Activated CD4-positive, alpha-beta T cell treated with anti-CD3 and anti-CD28 coated beads, Interleukin-2, amount 10 ng/mL, durations not matched to agents 24 days and 14 days (primary cell): ENCODE measurements at regions of chr10 and their contacts with region 1.

Region 1: GRCh38 chr10:110547139-110547761 is 20.2 kb upstream of the SMC3 start:
- DNase-seq: peak; percentile 77
- H3K4me3 Mint-ChIP-seq: peak overlapping the region; percentile 47
- H3K27ac Mint-ChIP-seq: peak overlapping the region; percentile 10
- H3K4me1 Mint-ChIP-seq: peaks cover 19% of the 10 kb centered on the region
- H3K27me3 Mint-ChIP-seq: peaks cover 28% of the 10 kb centered on the region

Region 2: GRCh38 chr10:110502851-110503301 is 44.4 kb before region 1 on chr10:
- intact Hi-C with region 1: loop called (anchors 1 kb)
- DNase-seq: peak; percentile 84
- H3K4me3 Mint-ChIP-seq: peak overlapping the region; percentile 99
- H3K27ac Mint-ChIP-seq: peak overlapping the region; percentile 92
- H3K4me1 Mint-ChIP-seq: peaks cover 78% of the 10 kb centered on the region
- H3K27me3 Mint-ChIP-seq: no peaks in the 10 kb centered on the region

Region 3: GRCh38 chr10:110528224-110528997 is 18.8 kb before region 1 on chr10:
- intact Hi-C with region 1: no loop called
- DNase-seq: no peak
- H3K4me3 Mint-ChIP-seq: peak overlapping the region; percentile 57
- H3K27ac Mint-ChIP-seq: peak overlapping the region; percentile 84
- H3K4me1 Mint-ChIP-seq: peaks cover 69% of the 10 kb centered on the region
- H3K27me3 Mint-ChIP-seq: no peaks in the 10 kb centered on the region

Region 4: DNA sequence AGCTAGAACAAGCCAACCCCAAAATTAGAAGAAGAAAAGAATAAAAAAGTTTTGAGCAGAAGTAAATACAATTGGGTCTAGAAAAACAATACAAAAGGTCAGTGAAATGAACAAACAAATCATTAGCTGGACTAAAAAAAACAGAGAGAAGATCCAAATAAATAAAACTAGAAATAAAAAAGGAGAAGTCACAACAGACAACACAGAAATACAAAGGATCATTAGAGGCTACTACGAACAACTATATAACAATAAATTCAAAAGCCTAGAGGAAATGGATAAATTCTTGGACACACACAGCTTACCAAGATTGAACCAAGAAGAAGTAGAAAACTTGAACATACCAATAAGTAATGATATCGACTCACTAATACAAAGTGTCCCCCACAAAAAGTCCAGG is 516.2 kb after region 1 on chr10:
- intact Hi-C with region 1: no loop called
- DNase-seq: no peak
- H3K4me3 Mint-ChIP-seq: no peak overlapping the region
- H3K27ac Mint-ChIP-seq: no peak overlapping the region
- H3K4me1 Mint-ChIP-seq: no peaks in the 10 kb centered on the region
- H3K27me3 Mint-ChIP-seq: peaks cover 46% of the 10 kb centered on the region